Gastrocnemius medialis (tissue), 4 donors: ENCODE measurements at regions of chr11 and their contacts with region 1.

Region 1: DNA sequence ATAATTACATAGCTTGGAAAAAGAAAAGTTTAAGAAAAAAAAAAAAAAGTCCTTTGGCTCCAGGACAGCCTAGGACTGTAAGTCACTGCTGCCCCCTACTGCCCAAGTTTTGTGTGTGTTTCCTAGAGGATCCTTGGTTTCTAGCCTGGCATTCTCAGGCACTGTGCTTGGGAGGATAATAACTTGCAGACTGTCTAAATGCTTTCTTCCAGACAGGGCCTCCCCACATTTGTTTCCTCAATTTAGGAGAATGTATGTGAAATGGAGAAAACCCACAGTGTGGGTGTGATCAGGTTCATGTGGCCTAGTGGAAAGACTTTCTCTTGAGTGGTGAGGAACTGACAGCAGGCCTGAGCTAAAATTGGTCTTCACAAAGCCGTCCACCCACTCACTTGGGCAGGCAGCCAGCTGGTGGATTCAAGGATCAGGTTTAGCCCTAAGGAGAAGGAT is 191.0 kb downstream of the NAV2 start:
- DNase-seq: peak; percentile 19 to 59
- ATAC-seq: peak; percentile 78 to 88
- H3K4me3 ChIP-seq: no peak overlapping the region
- H3K27ac ChIP-seq: no peak overlapping the region
- H3K4me1 ChIP-seq: no peaks in the 10 kb centered on the region
- H3K27me3 ChIP-seq: no peaks in the 10 kb centered on the region
- CTCF ChIP-seq: peak; percentile 64 to 84 (median 74)
- POLR2A ChIP-seq: no peak

Region 2: GRCh38 chr11:19311308-19312030 is 592.2 kb before region 1 on chr11:
- in situ Hi-C with region 1: loop called in 1 of 4 experiments (anchors 25 kb)
- intact Hi-C with region 1: no loop called
- DNase-seq: peak in 1 of 2 donors; percentile 29
- ATAC-seq: peak; percentile 73 to 84
- H3K4me3 ChIP-seq: no peak overlapping the region
- H3K27ac ChIP-seq: no peak overlapping the region
- H3K4me1 ChIP-seq: peaks cover 0 to 3% of the 10 kb centered on the region in 2 donors
- H3K27me3 ChIP-seq: no peaks in the 10 kb centered on the region
- CTCF ChIP-seq: peak; percentile 26 to 76 (median 66)
- POLR2A ChIP-seq: no peak

Region 3: DNA sequence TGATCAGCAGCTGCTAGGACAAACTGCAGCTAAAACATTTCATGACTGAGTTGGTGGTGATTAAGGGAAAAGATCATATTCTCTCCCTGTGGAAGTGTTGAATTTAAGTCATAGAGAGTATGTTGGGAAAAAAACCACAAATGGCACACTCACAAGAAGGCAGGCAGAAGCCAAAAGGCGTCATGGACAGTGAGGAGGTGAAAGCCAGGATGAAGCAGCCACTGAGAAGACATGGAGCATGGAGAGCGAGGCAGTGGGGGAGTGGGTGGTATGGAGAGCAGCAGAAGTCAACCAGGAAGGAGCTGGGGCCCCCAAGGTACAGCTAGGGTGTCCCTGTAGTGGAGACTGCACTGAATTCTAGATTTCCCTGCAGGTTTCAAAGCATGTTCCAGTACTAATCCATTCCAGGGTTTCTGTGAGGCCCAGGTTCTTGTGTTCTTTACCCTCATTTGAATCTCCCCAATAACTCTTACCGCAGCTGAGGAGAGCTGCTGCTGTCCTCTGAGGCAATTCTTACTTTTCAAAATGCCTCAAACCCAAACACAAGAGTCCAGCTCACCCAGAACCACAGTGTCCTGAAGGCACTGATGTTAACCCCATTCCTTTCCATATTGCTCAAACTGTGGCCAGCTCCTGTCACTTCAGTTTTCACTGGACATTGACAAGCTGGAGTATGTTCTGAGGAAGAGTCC is 471.1 kb before region 1 on chr11:
- in situ Hi-C with region 1: no loop called
- intact Hi-C with region 1: no loop called
- DNase-seq: no peak
- ATAC-seq: no peak
- H3K4me3 ChIP-seq: no peak overlapping the region
- H3K27ac ChIP-seq: no peak overlapping the region
- H3K4me1 ChIP-seq: no peaks in the 10 kb centered on the region
- H3K27me3 ChIP-seq: no peaks in the 10 kb centered on the region
- CTCF ChIP-seq: no peak
- POLR2A ChIP-seq: no peak

Region 4: DNA sequence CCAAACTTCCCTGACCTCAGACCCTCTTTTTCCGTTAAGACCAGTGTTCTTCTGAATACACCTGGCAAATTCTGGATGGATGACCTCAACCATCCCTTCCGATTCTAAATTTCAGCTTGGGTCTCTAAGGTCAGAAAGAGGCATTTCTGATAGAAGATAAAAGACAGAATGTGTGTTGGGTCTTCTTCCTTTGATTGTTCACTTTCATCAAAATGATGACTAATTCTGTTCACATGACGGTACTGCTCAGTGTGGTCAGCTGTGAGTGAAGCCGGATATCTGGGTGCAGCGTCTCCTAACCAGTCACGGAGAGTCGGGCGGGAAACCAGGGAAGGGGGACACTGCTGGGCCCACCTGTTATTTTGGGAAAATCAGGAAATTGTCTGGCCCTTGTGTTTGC is 342.6 kb before region 1 on chr11:
- in situ Hi-C with region 1: loop called (anchors 5 kb)
- intact Hi-C with region 1: loop called (anchors 1 kb)
- DNase-seq: no peak
- ATAC-seq: no peak
- H3K4me3 ChIP-seq: no peak overlapping the region
- H3K27ac ChIP-seq: no peak overlapping the region
- H3K4me1 ChIP-seq: peaks cover 0 to 9% of the 10 kb centered on the region in 2 donors
- H3K27me3 ChIP-seq: no peaks in the 10 kb centered on the region
- CTCF ChIP-seq: no peak
- POLR2A ChIP-seq: no peak

Region 5: DNA sequence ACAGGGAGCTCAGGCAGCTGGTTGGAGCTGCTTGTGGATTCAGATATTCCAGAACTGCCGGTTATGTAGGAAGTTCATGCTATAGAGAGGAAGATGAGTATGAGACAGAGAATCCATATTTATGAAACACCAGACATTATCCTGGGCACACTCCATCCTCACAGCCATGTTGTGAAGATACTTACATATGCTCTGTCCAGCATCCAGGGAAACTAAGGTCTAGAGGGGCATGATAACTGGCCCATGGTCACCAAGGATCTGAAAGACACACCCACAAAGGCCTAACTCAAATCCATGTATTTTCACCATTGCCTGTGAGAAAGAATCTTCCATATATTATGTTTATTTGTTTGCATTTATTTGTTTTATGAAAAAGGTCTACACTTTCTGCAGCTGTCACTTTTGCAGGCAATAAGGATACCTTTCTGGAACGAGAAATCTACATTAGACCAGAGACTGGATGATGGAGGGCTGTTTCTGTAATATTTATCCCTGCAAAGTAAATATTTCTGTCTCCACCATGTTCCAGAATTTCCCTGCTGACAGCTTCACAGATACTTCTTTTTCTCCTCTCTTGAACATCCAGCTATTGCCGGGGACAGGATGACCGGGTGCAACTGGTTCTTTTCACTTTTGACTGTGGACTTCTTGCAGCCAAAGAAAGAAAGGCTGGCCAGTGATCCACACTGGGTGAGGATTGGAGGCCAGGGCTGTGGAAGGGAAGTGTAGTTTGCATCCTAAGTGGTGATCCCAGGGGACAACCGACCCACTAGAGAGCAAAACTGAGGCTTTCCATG is 336.9 kb before region 1 on chr11:
- in situ Hi-C with region 1: loop called (anchors 5 kb)
- intact Hi-C with region 1: loop called (anchors 1 kb)
- DNase-seq: no peak
- ATAC-seq: no peak
- H3K4me3 ChIP-seq: no peak overlapping the region
- H3K27ac ChIP-seq: no peak overlapping the region
- H3K4me1 ChIP-seq: peaks cover 0 to 9% of the 10 kb centered on the region in 2 donors
- H3K27me3 ChIP-seq: no peaks in the 10 kb centered on the region
- CTCF ChIP-seq: no peak
- POLR2A ChIP-seq: no peak

Region 6: GRCh38 chr11:19814421-19814820 is 89.2 kb before region 1 on chr11:
- in situ Hi-C with region 1: no loop called
- intact Hi-C with region 1: loop called (anchors 2 kb)
- DNase-seq: no peak
- ATAC-seq: no peak
- H3K4me3 ChIP-seq: no peak overlapping the region
- H3K27ac ChIP-seq: peak overlapping the region in 2 of 4 donors; percentile 74 to 76
- H3K4me1 ChIP-seq: peaks cover 57 to 65% of the 10 kb centered on the region in 2 donors
- H3K27me3 ChIP-seq: no peaks in the 10 kb centered on the region
- CTCF ChIP-seq: peak in 1 of 5 experiments; percentile 8
- POLR2A ChIP-seq: no peak

Region 7: GRCh38 chr11:20197881-20198280 is 294.2 kb after region 1 on chr11:
- in situ Hi-C with region 1: no loop called
- intact Hi-C with region 1: no loop called
- DNase-seq: no peak
- ATAC-seq: no peak
- H3K4me3 ChIP-seq: no peak overlapping the region
- H3K27ac ChIP-seq: no peak overlapping the region
- H3K4me1 ChIP-seq: no peaks in the 10 kb centered on the region
- H3K27me3 ChIP-seq: no peaks in the 10 kb centered on the region
- CTCF ChIP-seq: no peak
- POLR2A ChIP-seq: no peak